Activated CD4-positive, alpha-beta memory T cell treated with anti-CD3 and anti-CD28 coated beads for 36 hours (primary cell): ENCODE measurements at regions of chr15 and their contacts with region 1.

Region 1: DNA sequence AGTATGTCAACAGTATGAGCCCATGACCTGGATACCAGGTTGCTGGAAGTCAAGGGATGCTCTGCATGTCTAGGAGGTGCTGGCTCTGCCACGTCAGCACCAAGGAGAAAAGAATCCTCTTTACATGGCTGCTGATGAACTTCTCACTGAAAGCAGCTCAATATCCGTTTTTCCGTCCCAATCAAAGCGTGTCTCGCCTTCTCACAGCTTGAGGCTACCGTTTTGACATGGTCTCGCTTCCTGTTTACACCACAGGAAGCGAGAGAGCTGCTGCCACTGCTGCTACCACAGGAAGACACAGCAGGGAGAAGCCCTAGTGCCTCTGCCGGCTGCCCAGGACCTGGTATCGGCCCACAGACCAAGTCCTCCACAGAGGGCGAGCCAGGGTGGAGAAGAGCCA is 27.3 kb downstream of the STARD5 start:
- DNase-seq: peak; percentile 89
- H3K4me3 Mint-ChIP-seq: peak overlapping the region; percentile 99
- H3K27ac Mint-ChIP-seq: peak overlapping the region; percentile 99
- H3K4me1 Mint-ChIP-seq: peaks cover 80% of the 10 kb centered on the region
- H3K27me3 Mint-ChIP-seq: no peaks in the 10 kb centered on the region

Region 2: DNA sequence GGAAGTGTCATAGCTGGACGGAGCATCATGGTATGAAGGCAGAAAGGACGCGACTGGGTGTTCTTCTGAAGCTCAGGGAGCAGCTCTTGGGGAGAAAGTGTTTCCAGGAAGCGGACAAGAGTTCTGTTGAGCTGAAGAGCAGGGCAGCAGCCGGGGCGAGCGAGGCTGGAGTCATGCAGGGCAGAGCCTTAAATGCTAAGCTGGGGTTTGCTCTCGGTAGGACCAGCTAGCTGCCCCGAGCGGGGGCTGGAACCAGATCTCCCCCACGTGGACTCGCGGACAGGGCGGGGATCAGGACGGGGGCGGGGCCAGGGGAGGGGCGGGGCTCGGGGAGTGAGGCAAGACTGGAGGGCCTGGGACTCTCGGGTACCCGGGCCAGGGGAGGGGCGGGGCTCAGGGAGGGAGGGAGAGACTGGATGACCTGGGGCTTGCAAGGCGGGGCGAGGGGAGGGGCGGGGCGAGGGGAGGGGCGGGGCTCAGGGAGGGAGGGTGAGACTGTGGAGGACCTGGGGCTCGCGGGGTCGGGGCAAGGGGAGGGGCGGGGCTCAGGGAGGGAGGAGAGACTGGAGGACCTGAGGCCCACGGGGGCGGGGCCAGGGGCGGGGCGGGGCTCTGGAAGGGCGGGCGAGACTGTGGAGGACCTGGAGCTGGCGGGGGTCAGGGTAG is 1144.4 kb before region 1 on chr15:
- CTCF ChIA-PET with region 1: no interaction called
- POLR2A ChIA-PET with region 1: no interaction called
- intact Hi-C with region 1: loop called (anchors 10 kb)
- DNase-seq: peak; percentile 98
- H3K4me3 Mint-ChIP-seq: peak overlapping the region; percentile 74
- H3K27ac Mint-ChIP-seq: peak overlapping the region; percentile 50
- H3K4me1 Mint-ChIP-seq: peaks cover 23% of the 10 kb centered on the region
- H3K27me3 Mint-ChIP-seq: no peaks in the 10 kb centered on the region

Region 3: GRCh38 chr15:81000624-81001151 is 296.0 kb before region 1 on chr15 and contains the start of gene TLNRD1:
- CTCF ChIA-PET with region 1: no interaction called
- POLR2A ChIA-PET with region 1: interaction called, 8 read pairs
- intact Hi-C with region 1: loop called (anchors 1 kb)
- DNase-seq: peak; percentile 92
- H3K4me3 Mint-ChIP-seq: peak within 1 kb of the TSS; percentile 97
- H3K27ac Mint-ChIP-seq: peak within 1 kb of the TSS; percentile 99
- H3K4me1 Mint-ChIP-seq: peaks cover 42% of the 10 kb centered on the region
- H3K27me3 Mint-ChIP-seq: no peaks in the 10 kb centered on the region
- total RNA-seq, gene TLNRD1: 23.5 to 25.4 TPM

Region 4: DNA sequence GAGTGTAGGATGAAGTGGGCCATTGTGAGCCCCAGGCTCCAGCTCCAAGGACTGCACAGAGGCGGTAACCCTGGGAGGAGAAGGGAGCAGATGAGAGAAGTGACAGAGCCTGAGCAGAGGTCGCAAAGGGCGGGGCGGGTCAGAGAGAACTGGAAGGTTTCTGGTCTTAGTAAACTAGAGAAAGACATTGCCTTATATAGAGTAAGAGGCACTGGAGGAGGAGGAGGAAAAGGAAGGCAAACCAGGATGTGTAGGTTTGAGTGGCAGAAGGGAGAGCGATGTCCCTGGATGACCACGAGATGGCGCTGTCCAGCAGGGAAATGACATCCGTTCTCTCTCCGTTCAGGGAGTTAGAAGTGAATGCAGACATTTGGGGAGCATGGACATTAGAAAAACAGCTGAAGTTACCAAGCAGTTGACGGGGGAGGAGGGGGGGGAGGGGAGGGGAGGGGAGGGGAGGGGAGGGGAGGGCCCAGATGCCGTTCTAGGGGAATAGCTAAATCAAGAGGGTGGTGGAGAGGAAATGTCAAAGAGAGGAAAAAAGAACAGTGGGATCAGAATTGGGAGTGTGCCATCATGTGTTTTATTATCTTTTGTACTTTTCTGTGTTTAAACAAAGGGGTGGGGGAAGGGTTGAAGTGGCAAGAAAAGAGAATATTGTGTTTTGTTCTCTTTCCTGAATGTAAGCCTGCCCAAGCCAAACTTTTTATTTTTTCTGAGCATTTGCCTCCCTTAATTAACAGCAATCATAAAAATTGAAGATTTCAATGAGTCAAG is 21.6 kb before region 1 on chr15:
- CTCF ChIA-PET with region 1: interaction called, 45 read pairs
- POLR2A ChIA-PET with region 1: interaction called, 3 read pairs
- intact Hi-C with region 1: loop called (anchors 1 kb)
- DNase-seq: peak; percentile 89
- H3K4me3 Mint-ChIP-seq: peak overlapping the region; percentile 3
- H3K27ac Mint-ChIP-seq: peak overlapping the region; percentile 23
- H3K4me1 Mint-ChIP-seq: peaks cover 22% of the 10 kb centered on the region
- H3K27me3 Mint-ChIP-seq: no peaks in the 10 kb centered on the region

Region 5: GRCh38 chr15:81311752-81312464 is 15.2 kb after region 1 on chr15:
- CTCF ChIA-PET with region 1: interaction called, 5 read pairs
- POLR2A ChIA-PET with region 1: interaction called, 20 read pairs
- intact Hi-C with region 1: no loop called
- DNase-seq: no peak
- H3K4me3 Mint-ChIP-seq: no peak overlapping the region
- H3K27ac Mint-ChIP-seq: peak overlapping the region; percentile 14
- H3K4me1 Mint-ChIP-seq: peaks cover 59% of the 10 kb centered on the region
- H3K27me3 Mint-ChIP-seq: no peaks in the 10 kb centered on the region

Region 6: GRCh38 chr15:81400640-81401236 is 104.1 kb after region 1 on chr15:
- CTCF ChIA-PET with region 1: interaction called, 10 read pairs
- POLR2A ChIA-PET with region 1: no interaction called
- intact Hi-C with region 1: loop called (anchors 1 kb)
- DNase-seq: no peak
- H3K4me3 Mint-ChIP-seq: no peak overlapping the region
- H3K27ac Mint-ChIP-seq: no peak overlapping the region
- H3K4me1 Mint-ChIP-seq: no peaks in the 10 kb centered on the region
- H3K27me3 Mint-ChIP-seq: no peaks in the 10 kb centered on the region